ENCODE measurements at regions of chr4 and their contacts with region 1.

Region 1: DNA sequence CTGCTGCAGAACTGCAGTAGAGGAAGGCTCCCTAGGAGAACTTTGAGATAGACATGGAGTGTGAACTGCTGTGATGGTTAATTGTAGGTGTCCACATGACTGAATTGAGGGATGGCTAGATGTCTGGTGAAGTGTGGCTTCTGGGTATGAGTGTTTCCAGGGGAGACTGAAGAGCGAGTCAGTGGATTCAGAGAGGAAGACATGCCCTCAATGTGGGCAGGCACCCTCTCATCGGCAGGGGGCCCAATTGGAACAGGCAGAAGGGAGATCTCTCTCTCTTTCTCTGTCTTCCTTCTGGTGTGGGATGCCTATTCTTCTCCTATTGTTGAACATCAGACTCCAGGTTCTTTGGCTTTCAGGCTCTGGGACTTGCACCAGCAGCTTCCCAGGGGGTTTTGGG is 304.7 kb upstream of the GATB start:
- DNase-seq: peak in 5 of 9 donors; percentile 6 to 36 (median 22)
- ATAC-seq: no peak
- H3K4me3 ChIP-seq: no peak overlapping the region
- H3K4me3 Mint-ChIP-seq: peak overlapping the region in 1 of 10 donors; percentile 1
- H3K27ac ChIP-seq: no peak overlapping the region
- H3K27ac Mint-ChIP-seq: peak overlapping the region in 3 of 9 donors; percentile 12 to 40 (median 28)
- H3K4me1 ChIP-seq: peaks cover 4 to 18% of the 10 kb centered on the region in 2 donors
- H3K4me1 Mint-ChIP-seq: peaks cover 18 to 70% (median 53%) of the 10 kb centered on the region in 7 donors
- H3K27me3 ChIP-seq: no peaks in the 10 kb centered on the region
- H3K27me3 Mint-ChIP-seq: no peaks in the 10 kb centered on the region

Region 2: GRCh38 chr4:152328596-152328995 is 263.1 kb after region 1 on chr4:
- CTCF ChIA-PET with region 1: no interaction called
- POLR2A ChIA-PET with region 1: no interaction called
- intact Hi-C with region 1: loop called in 1 of 2 experiments (anchors 5 kb)
- DNase-seq: no peak
- ATAC-seq: no peak
- H3K4me3 ChIP-seq: no peak overlapping the region
- H3K4me3 Mint-ChIP-seq: no peak overlapping the region
- H3K27ac ChIP-seq: no peak overlapping the region
- H3K27ac Mint-ChIP-seq: peak overlapping the region in 2 of 9 donors; percentile 75 to 76
- H3K4me1 ChIP-seq: peaks cover 0 to 13% of the 10 kb centered on the region in 2 donors
- H3K4me1 Mint-ChIP-seq: peaks cover 6 to 24% (median 21%) of the 10 kb centered on the region in 7 donors
- H3K27me3 ChIP-seq: no peaks in the 10 kb centered on the region
- H3K27me3 Mint-ChIP-seq: no peaks in the 10 kb centered on the region

Region 3: DNA sequence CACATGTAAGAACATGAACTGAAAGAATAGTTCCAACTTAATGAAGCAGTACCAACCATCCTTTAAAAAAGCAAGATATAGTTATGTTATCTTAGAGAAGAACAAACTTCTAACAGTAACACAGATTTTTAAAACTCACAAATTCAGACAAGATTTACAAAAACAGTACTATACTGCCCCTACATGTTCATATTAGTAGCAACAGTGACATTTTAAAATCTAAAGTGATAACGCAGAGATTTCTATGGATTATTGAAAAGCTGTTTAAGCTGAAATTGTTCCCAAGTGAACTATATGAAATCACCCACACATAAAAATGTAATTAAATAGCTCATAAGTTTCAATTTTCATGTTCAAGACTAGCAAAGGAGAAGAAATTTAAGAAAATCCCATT is 304.4 kb after region 1 on chr4:
- CTCF ChIA-PET with region 1: interaction called, 3 read pairs
- POLR2A ChIA-PET with region 1: no interaction called
- intact Hi-C with region 1: loop called in 1 of 2 experiments (anchors 1 kb)
- DNase-seq: peak in 3 of 9 donors; percentile 12 to 28 (median 13)
- ATAC-seq: no peak
- H3K4me3 ChIP-seq: no peak overlapping the region
- H3K4me3 Mint-ChIP-seq: no peak overlapping the region
- H3K27ac ChIP-seq: no peak overlapping the region
- H3K27ac Mint-ChIP-seq: peak overlapping the region in 1 of 9 donors; percentile 7
- H3K4me1 ChIP-seq: no peaks in the 10 kb centered on the region
- H3K4me1 Mint-ChIP-seq: peaks cover 5 to 20% (median 9%) of the 10 kb centered on the region in 7 donors
- H3K27me3 ChIP-seq: no peaks in the 10 kb centered on the region
- H3K27me3 Mint-ChIP-seq: no peaks in the 10 kb centered on the region

Measured in naive thymus-derived CD4-positive, alpha-beta T cell (primary cell).